Right ventricle myocardium inferior (tissue), 1 donor: ENCODE measurements at regions of chr14 and their contacts with region 1.

Region 1: GRCh38 chr14:102046343-102047278 is 40.2 kb downstream of the HSP90AA1 start:
- DNase-seq: peak; percentile 84
- ATAC-seq: peak; percentile 93

Region 2: DNA sequence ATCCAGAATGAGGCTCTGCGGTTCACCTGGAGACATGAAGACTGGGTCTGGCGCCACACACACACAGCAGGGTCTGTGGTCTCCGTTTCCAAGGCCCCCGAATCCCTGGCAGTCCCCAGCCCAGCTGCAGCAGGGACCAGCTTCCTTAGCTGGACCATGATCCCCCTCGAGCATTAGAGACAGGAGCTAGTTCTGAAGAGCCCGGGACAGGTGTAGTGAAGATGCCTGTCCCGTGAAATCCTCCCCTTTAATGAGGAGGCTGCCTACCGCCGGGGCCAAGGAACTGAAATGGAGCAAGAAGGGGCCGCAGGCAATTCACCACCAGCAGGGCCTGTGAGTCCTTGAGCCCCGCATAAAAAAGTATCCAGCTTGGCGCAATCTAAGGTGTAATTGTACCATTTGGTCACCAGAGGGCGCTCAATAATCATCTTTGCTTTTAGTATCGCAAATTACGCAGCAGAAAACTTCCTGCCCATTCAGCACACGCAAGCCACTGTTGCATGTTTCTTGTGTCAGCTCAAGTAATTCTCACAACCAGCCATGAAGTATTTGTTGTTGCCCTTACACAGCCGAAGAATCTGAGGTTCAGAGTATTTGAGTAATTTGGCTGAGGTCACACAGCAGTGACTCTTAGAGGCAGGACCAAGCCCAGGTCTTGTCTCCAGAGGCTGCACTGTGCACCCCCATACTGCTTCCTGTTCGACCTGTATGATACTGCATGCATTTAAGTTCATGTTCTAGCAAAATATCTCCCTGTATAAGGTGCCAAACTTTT is 339.4 kb before region 1 on chr14:
- intact Hi-C with region 1: loop called (anchors 5 kb)
- DNase-seq: no peak
- ATAC-seq: peak; percentile 66

Region 3: GRCh38 chr14:101797856-101798255 is 248.8 kb before region 1 on chr14:
- intact Hi-C with region 1: no loop called
- DNase-seq: no peak
- ATAC-seq: peak; percentile 88

Region 4: GRCh38 chr14:101972268-101972774 is 74.3 kb before region 1 on chr14:
- intact Hi-C with region 1: loop called (anchors 5 kb)
- DNase-seq: peak; percentile 88
- ATAC-seq: peak; percentile 98

Region 5: DNA sequence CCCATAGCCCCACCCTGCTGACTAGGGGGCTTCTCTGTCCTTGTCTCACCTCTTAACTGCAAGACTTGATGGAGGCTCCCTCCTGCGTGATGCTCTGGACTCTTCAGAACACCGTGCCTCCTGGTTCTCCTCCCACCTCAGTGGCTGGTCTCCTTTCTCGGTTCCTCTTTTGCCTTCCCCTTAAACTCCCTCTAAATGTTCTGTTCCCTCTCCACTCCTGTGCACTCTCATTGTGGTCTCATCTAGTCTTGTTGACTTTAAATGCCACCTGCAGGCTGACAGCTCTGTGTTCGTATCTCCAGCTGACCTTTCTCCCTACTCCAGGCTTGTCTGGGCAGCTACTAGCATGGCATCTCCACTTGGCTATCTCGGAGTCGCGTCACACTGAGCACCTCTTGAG is 53.9 kb before region 1 on chr14:
- intact Hi-C with region 1: loop called (anchors 5 kb)
- DNase-seq: no peak
- ATAC-seq: peak; percentile 70

Region 6: GRCh38 chr14:102086972-102087761 is 40.6 kb after region 1 on chr14 and contains the start of gene HSP90AA1:
- intact Hi-C with region 1: loop called (anchors 5 kb)
- DNase-seq: peak; percentile 97
- ATAC-seq: peak; percentile 91
- total RNA-seq, gene HSP90AA1: 484 TPM